Natural killer cell (primary cell): ENCODE measurements at regions of chr19 and their contacts with region 1.

Region 1: DNA sequence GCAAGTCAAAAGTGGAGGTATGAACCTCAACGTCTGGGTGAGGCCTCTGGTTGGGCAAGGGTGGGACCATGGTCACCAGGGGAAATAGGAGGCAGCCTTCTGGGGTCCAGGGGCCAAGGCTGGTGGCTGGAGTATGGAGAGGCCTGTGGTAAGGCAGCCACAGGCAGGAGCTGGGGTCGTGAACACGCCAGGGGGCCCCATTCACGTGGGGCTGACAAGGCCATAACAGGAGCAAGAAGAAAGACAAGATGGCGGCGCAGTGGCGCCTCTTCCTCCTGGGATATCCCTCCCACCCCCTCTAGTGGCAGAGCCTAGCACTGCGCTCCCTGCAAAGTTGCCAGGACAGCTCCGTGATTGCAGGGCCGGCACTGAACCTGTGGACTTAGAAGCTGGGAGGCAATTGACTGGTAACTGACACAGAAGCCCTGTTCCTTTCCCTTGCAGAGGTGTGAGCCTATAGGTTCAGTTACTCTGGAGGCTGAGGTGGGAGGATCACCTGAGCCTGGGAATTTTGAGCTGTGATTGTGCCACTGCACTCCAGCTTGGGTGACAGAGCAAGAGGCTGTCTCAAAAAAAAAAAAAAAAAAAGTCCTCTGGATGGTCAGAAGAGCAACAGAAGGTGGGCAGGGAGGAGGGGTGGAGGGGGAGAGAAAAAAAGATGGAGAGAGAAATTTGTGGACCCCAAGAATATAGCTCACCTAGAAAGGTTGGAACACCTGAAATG is 19.7 kb upstream of the EDDM13 start:
- DNase-seq: peak; percentile 65 to 78
- ATAC-seq: peak; percentile 83 to 94 (median 92)
- H3K4me3 ChIP-seq: no peak overlapping the region
- H3K4me3 Mint-ChIP-seq: no peak overlapping the region
- H3K27ac ChIP-seq: no peak overlapping the region
- H3K27ac Mint-ChIP-seq: no peak overlapping the region
- H3K4me1 ChIP-seq: no peaks in the 10 kb centered on the region
- H3K4me1 Mint-ChIP-seq: peaks cover 0 to 11% of the 10 kb centered on the region in 2 donors
- H3K27me3 ChIP-seq: no peaks in the 10 kb centered on the region
- H3K27me3 Mint-ChIP-seq: no peaks in the 10 kb centered on the region
- CTCF ChIP-seq: peak; percentile 74

Region 2: DNA sequence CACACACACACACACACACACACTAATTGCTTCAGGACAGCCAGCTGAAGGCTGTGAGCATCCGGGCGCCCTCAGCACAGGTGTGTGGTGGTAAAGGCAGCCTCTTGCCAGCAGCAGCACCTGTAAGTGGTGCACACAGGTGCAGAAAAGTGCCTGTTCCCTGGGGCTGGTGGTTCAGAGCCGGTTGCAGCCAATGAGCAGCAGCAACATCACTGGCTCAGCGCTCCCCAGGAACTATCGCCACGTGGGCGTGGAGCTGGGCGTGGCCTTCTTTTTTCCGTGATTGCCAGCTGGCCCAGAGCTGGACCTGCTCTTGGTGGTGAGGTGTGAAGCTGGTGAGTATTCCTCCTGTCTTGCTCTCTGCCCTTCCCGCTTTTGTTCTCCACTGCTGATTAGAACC is 266.4 kb before region 1 on chr19 and contains the start of gene NLRP5:
- intact Hi-C with region 1: no loop called
- DNase-seq: no peak
- ATAC-seq: no peak
- H3K4me3 ChIP-seq: no peak within 1 kb of the TSS
- H3K4me3 Mint-ChIP-seq: no peak within 1 kb of the TSS
- H3K27ac ChIP-seq: no peak within 1 kb of the TSS
- H3K27ac Mint-ChIP-seq: no peak within 1 kb of the TSS
- H3K4me1 ChIP-seq: no peaks in the 10 kb centered on the region
- H3K4me1 Mint-ChIP-seq: no peaks in the 10 kb centered on the region
- H3K27me3 ChIP-seq: no peaks in the 10 kb centered on the region
- H3K27me3 Mint-ChIP-seq: no peaks in the 10 kb centered on the region
- CTCF ChIP-seq: no peak
- total RNA-seq, gene NLRP5: not detected

Region 3: DNA sequence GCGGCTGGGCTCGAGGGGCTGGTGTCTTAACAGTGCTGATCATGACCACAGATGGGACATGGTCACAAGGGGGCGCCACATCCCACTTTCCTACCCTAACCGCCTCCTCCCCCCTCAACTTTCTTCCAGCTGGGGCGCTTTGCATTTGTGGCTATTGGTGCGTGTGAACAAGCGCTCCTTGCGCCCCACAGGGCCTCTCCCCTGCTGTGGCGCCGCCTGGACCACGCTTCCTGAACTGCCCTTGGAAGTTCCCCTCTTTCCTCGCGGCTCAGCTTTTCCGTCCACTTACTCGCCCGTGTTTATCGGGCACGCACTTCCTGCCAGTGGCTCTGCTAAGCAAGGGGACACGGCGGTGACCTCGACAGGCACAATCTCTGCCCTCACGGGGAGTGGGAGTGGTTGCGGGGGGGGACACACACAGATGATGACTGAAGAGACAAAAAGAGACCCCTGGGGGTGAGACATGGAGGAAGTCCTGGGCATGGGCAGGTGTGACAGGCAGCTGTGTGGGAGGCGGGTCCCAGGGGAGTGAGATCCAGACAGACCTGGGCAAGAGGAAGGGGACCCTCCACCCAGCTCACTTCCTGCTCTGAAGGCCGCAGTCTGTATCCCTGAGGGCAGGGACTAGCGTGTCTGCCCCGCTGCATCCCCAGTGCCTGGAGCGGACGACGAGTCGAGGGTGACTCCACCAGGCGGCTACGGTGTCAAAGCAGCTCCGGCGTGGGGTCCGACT is 172.0 kb before region 1 on chr19:
- intact Hi-C with region 1: loop called (anchors 2 kb)
- DNase-seq: peak; percentile 58 to 81
- ATAC-seq: peak; percentile 70 to 80 (median 77)
- H3K4me3 ChIP-seq: peak overlapping the region; percentile 41
- H3K4me3 Mint-ChIP-seq: peak overlapping the region; percentile 79
- H3K27ac ChIP-seq: no peak overlapping the region
- H3K27ac Mint-ChIP-seq: peak overlapping the region in 1 of 2 donors; percentile 86
- H3K4me1 ChIP-seq: peaks cover 12% of the 10 kb centered on the region
- H3K4me1 Mint-ChIP-seq: peaks cover 10 to 12% of the 10 kb centered on the region in 2 donors
- H3K27me3 ChIP-seq: no peaks in the 10 kb centered on the region
- H3K27me3 Mint-ChIP-seq: peaks cover 0 to 5% of the 10 kb centered on the region in 2 donors
- CTCF ChIP-seq: peak; percentile 19

Region 4: DNA sequence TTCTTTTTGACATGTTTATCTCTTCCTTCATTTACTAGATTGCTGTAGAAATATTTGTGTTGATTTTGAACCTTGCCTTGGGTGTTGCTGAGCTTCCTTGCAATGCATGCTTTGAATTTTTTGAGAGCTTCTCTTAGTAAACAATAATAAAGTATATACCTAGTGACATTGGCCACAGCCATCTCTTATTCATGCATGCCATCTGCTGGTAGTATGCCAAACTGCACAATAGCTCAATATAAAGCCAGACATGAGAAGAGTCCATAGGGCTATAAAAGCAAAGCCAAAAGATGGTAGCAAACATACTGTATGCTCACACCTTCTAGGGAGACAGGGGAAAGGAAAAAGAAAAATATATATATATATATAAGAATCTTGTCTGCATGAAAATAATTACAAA is 80.6 kb after region 1 on chr19:
- intact Hi-C with region 1: loop called (anchors 1 kb)
- DNase-seq: peak in 1 of 2 donors; percentile 73
- ATAC-seq: peak; percentile 75 to 87 (median 85)
- H3K4me3 ChIP-seq: no peak overlapping the region
- H3K4me3 Mint-ChIP-seq: no peak overlapping the region
- H3K27ac ChIP-seq: no peak overlapping the region
- H3K27ac Mint-ChIP-seq: no peak overlapping the region
- H3K4me1 ChIP-seq: no peaks in the 10 kb centered on the region
- H3K4me1 Mint-ChIP-seq: no peaks in the 10 kb centered on the region
- H3K27me3 ChIP-seq: no peaks in the 10 kb centered on the region
- H3K27me3 Mint-ChIP-seq: no peaks in the 10 kb centered on the region
- CTCF ChIP-seq: peak; percentile 90

Region 5: DNA sequence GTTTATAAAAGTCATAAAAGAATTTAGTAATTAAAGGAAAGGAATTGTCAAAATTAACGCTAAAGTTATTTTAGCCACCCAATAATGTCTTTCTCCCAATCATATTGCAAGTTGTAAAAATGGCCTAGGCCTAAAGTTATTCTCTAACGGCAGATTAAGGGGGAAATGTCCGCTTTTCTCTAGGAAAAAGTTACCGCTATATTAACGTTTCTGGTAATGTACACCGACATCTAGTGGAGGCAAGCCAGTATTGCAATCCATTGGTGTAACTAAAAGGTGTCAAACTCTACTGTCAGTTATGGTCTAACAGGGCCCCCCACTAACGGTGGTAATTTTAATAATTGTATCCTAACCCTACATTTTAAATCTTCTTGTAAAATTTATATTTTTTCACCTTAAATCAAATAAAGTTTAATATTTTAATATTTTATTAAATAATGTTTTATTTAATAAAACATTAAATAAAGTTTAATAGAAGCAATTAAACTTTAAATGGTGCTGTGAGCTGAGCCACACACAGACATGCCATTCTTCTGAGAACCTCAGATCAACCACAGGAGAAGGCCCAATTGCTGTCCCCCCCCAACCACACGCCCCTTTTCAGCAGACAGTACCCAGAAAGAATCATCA is 97.7 kb after region 1 on chr19:
- intact Hi-C with region 1: loop called (anchors 1 kb)
- DNase-seq: peak in 1 of 2 donors; percentile 73
- ATAC-seq: peak; percentile 63 to 72 (median 69)
- H3K4me3 ChIP-seq: no peak overlapping the region
- H3K4me3 Mint-ChIP-seq: no peak overlapping the region
- H3K27ac ChIP-seq: no peak overlapping the region
- H3K27ac Mint-ChIP-seq: no peak overlapping the region
- H3K4me1 ChIP-seq: no peaks in the 10 kb centered on the region
- H3K4me1 Mint-ChIP-seq: no peaks in the 10 kb centered on the region
- H3K27me3 ChIP-seq: no peaks in the 10 kb centered on the region
- H3K27me3 Mint-ChIP-seq: peaks cover 0 to 3% of the 10 kb centered on the region in 2 donors
- CTCF ChIP-seq: peak; percentile 78